K562 (cell line): ENCODE measurements at regions of chr3 and their contacts with region 1.

Region 1: DNA sequence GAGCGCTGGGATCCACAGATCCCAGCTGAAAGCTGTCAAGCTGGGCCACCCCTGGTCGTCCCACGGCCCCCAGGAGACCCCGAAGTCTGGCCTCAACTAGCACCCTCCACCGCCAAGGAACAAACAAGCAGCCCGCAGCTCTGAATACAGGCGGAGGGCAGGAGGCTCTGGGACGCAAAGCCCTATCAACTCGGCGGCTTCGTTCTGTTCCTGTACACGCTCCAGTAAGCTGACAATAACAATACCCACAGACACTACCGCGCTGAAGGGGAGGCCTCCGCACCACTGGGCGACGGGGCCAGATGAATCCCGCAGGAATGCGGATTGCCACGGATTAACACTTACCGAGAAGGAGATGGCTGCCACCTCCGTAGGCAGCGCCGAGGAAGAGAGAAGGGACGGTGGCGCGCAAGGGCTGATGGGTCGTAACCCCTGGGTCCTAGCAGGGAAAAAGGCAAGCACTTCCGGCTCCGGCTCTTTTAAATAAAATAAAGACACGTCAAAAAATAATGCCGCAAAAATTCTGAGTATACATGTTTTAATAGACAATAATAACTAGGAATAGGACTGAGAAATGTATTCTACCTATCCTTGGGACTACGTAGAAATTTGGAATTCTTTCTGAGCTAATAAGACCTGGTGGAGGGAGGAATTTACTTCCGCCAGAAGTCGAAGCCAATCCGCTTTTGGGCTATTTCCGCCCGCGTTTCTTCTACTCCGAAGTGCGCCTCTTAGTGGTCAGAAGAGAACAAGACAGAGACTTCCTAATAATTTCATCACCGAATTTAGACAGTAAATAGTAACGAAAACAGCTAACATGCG is at the start of gene RPL32:
- DNase-seq: peak; percentile 90 to 97 (median 91)
- ATAC-seq: peak; percentile 82
- H3K4me3 ChIP-seq: peak within 1 kb of the TSS; percentile 85
- H3K27ac ChIP-seq: peak within 1 kb of the TSS; percentile 93
- H3K4me1 ChIP-seq: peaks cover 24 to 33% of the 10 kb centered on the region in 2 experiments; a peak in 4 of 5 replicates
- H3K27me3 ChIP-seq: no peaks in the 10 kb centered on the region
- CTCF ChIP-seq: peak; percentile 75 to 94 (median 93)
- EP300 ChIP-seq: no peak; the same call in 1 of the 2 replicates
- POLR2A ChIP-seq: peak; percentile 99
- RAD21 ChIP-seq: peak in 1 of 2 experiments; percentile 22; a peak in 2 of 4 replicates
- polyA plus RNA-seq, gene RPL32: 3,469 to 4,286 TPM

Region 2: DNA sequence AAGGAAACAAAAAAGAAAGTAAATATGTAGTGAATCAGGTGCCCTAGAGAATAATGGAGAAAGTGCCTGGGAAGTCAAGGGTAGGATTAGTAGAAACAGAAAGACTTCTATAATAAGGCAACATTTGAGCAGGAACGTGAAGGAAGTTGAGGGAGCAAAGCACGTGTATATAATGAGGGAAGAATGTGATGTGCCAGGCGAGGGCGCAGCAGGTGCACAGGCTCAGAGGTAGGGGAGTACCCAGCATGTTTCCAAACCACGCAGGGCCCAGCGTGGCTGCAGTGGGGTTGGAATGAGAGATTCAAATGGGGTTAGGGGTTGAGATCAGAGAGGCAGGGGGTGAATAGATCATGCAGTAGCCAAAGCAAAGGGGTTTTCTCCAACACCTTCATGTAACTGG is 1105.7 kb before region 1 on chr3:
- CTCF ChIA-PET with region 1: no interaction called
- POLR2A ChIA-PET with region 1: no interaction called
- in situ Hi-C with region 1: no loop called
- intact Hi-C with region 1: no loop called
- DNase-seq: no peak
- ATAC-seq: peak; percentile 29; the same call in 1 of the 3 replicates
- H3K4me3 ChIP-seq: no peak overlapping the region
- H3K27ac ChIP-seq: no peak overlapping the region
- H3K4me1 ChIP-seq: no peaks in the 10 kb centered on the region
- H3K27me3 ChIP-seq: peaks cover 33 to 53% of the 10 kb centered on the region in 2 experiments
- CTCF ChIP-seq: no peak
- EP300 ChIP-seq: no peak
- POLR2A ChIP-seq: no peak
- RAD21 ChIP-seq: peak in 1 of 2 experiments; percentile 6; a peak in 1 of 4 replicates

Region 3: DNA sequence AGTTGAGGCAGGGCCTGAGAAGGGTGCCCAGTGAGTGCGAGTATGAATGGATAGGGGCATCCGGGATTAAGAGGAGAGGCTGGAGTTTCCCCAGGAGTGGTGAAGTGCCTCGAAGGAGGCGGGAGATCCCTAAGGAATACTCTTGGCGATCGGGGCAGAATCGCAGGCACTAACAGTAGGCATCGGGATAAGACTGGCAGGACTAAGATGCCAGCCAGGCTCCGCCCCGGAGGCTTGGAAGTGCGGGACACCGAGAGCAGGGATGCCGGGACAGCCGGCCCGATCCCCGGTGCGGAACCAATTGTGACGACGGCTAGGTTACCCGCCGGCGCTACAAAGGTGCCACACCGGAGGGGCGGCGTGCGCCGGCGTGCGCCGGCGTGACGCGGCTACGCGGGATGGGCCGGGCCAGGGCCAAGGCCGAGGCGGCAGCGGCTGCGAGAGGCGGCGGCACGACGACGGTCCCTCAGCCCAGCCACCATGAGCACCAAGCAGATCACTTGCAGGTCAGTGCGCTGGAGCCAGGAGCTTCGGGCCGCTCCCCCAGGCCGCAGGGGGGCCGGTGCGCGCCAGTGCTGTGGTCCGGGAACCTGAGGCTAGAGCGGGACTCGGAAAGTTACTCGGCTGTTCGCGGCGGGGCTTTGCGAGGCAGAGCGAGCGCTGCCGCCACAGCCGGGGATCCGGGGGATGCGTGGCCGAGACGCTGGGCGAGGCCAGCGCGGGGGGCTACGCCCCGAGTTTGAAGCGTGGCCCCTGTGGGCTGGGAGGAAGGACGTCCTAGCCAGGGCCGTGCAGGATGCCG is 284.5 kb before region 1 on chr3 and contains the start of gene MKRN2:
- CTCF ChIA-PET with region 1: no interaction called
- POLR2A ChIA-PET with region 1: no interaction called
- in situ Hi-C with region 1: no loop called
- intact Hi-C with region 1: loop called (anchors 5 kb)
- DNase-seq: peak; percentile 92 to 94 (median 92)
- ATAC-seq: peak; percentile 93
- H3K4me3 ChIP-seq: peak within 1 kb of the TSS; percentile 82
- H3K27ac ChIP-seq: peak within 1 kb of the TSS; percentile 91
- H3K4me1 ChIP-seq: peaks cover 17 to 22% of the 10 kb centered on the region in 2 experiments
- H3K27me3 ChIP-seq: no peaks in the 10 kb centered on the region
- CTCF ChIP-seq: 0 out of 6 replicates have a peak, but pooled peaks of 1 of the 3 experiments have one; percentile 6
- EP300 ChIP-seq: peak; percentile 70
- POLR2A ChIP-seq: peak; percentile 99
- RAD21 ChIP-seq: peak in 1 of 2 experiments; percentile 2; a peak in 1 of 4 replicates
- polyA plus RNA-seq, gene MKRN2: 29.4 to 46.0 TPM

Region 4: DNA sequence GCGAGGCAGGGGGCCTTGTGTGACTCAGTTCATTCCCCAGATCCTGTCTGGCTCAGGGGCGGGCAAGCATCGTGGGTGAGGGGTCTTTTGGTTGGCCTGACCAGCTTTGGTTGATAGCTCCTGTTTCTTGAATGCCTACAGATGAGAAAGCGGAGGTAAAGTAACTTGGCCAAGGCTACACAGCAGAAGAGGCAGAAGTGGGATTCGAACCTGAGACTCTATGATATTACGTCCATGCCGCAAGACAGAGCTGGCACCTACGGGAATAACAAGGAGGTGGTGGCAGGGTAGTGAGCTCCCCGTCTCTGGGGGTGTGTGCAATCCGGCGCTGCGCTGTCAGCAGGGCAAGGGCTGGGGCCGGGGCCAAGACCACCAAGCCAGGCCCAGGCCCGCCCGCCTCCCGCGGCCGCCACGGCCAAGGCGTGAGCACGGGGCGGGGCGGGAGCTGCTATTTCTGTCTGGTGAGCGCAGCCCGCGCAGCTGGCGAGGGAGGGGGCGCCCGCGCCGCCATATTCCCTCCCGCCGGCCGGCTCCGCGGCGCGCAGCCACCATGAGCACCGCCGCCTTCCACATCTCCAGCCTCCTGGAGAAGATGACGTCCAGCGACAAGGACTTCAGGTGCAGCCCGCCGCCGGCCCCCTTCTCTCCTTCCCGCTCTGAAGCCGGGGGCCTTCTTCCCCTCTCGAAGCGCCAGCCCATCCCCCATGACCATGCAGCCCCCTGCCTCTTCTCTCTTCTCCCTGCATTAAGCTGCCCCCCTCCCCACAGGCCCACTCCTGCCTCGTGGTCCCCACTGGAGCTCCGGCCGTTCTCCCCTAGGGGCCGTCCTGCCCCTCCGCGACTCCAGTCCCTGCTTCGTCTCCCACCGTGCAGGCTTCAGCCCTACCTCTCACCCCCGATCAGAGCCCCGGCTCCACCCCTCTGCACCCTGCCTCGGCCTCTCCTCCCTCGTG is 44.9 kb before region 1 on chr3 and contains the start of gene CAND2:
- CTCF ChIA-PET with region 1: no interaction called
- POLR2A ChIA-PET with region 1: interaction called, 10 read pairs
- in situ Hi-C with region 1: no loop called
- intact Hi-C with region 1: no loop called
- DNase-seq: peak; percentile 78 to 87 (median 84)
- ATAC-seq: peak; percentile 96
- H3K4me3 ChIP-seq: peak within 1 kb of the TSS; percentile 73
- H3K27ac ChIP-seq: peak within 1 kb of the TSS; percentile 77
- H3K4me1 ChIP-seq: peaks cover 8 to 25% of the 10 kb centered on the region in 2 experiments; a peak in 3 of 5 replicates
- H3K27me3 ChIP-seq: no peaks in the 10 kb centered on the region
- CTCF ChIP-seq: no peak
- EP300 ChIP-seq: no peak
- POLR2A ChIP-seq: peak; percentile 82
- RAD21 ChIP-seq: no peak
- polyA plus RNA-seq, gene CAND2: 0.91 to 1.4 TPM

Region 5: GRCh38 chr3:12822725-12823373 is 18.5 kb before region 1 on chr3:
- CTCF ChIA-PET with region 1: no interaction called
- POLR2A ChIA-PET with region 1: interaction called, 70 read pairs
- in situ Hi-C with region 1: no loop called
- intact Hi-C with region 1: no loop called
- DNase-seq: peak in 3 of 4 experiments; percentile 49 to 64 (median 49)
- ATAC-seq: peak; percentile 83
- H3K4me3 ChIP-seq: no peak overlapping the region
- H3K27ac ChIP-seq: no peak overlapping the region; the same call in 2 of the 3 replicates
- H3K4me1 ChIP-seq: peaks cover 0 to 2% of the 10 kb centered on the region in 2 experiments; a peak in 1 of 5 replicates
- H3K27me3 ChIP-seq: no peaks in the 10 kb centered on the region
- CTCF ChIP-seq: peak; percentile 52 to 74 (median 57); a peak in 4 of 6 replicates
- EP300 ChIP-seq: no peak
- POLR2A ChIP-seq: no peak
- RAD21 ChIP-seq: peak in 1 of 2 experiments; percentile 44; a peak in 3 of 4 replicates

Region 6: DNA sequence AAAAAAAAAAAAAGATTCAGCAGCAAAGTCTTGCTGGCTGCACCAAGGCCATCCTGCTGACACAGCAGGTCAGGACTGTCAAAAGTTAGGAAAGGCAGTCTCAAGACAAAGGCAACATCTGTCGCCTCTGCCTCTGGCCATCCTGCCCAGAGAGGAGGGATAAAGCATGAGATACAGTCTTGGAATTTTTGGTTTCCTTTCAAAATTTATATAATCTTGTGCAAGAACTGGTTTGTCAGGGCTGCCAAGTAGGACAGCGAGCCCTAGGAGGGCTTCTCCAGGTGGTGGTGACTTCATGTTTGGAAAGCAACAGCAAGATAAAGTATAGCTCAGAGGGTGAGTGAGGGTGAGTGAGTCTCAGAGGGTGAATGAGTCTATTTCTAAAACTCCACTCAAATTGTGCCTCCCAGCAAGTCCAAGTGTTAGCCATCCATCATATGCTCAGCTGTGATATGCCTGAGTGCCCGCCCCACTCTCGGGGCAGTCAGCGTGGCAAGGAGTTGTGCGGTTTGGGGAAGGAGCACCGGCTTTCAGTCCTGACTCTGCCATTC is 11.9 kb after region 1 on chr3:
- CTCF ChIA-PET with region 1: no interaction called
- POLR2A ChIA-PET with region 1: interaction called, 25 read pairs
- in situ Hi-C with region 1: no loop called
- intact Hi-C with region 1: no loop called
- DNase-seq: no peak
- ATAC-seq: no peak
- H3K4me3 ChIP-seq: no peak overlapping the region
- H3K27ac ChIP-seq: no peak overlapping the region
- H3K4me1 ChIP-seq: no peaks in the 10 kb centered on the region; a peak in 1 of 5 replicates
- H3K27me3 ChIP-seq: peaks cover 41 to 53% of the 10 kb centered on the region in 2 experiments
- CTCF ChIP-seq: no peak
- EP300 ChIP-seq: no peak
- POLR2A ChIP-seq: no peak
- RAD21 ChIP-seq: no peak

Region 7: DNA sequence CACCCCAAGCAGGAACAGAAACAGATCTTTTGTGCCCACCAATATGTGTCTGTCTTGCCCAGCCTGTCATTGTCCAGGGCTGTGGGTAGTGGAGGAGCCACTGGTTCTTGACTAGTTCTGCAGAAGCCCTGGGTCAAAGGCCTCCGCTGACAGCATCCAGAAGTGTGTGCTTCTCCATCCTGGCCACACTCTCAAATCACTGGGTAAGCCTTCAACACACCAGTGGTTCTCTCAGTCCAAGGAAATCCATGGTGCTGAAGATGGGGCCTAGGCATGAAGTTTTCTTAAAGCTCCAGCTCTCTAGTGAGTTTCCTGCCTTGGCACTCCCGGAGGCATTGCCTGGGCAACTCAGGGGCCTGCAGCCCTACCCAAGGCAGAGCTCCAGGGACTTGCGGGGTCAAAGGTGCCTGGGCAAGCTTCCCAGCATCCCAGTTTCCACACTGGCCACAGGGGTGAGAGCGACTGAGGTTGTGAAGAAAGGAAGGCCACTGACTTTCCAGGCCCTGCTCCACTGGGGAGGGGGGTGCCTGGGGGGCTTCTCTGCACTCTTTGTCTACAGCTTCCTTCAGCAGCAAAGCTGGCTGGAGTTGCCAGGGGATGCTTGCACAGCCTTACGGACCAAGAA is 37.9 kb after region 1 on chr3:
- CTCF ChIA-PET with region 1: no interaction called
- POLR2A ChIA-PET with region 1: interaction called, 12 read pairs
- in situ Hi-C with region 1: no loop called
- intact Hi-C with region 1: no loop called
- DNase-seq: peak in 2 of 4 experiments; percentile 61 to 67
- ATAC-seq: peak; percentile 42
- H3K4me3 ChIP-seq: no peak overlapping the region
- H3K27ac ChIP-seq: peak overlapping the region; percentile 43
- H3K4me1 ChIP-seq: peaks cover 56 to 77% of the 10 kb centered on the region in 2 experiments
- H3K27me3 ChIP-seq: no peaks in the 10 kb centered on the region
- CTCF ChIP-seq: no peak
- EP300 ChIP-seq: no peak
- POLR2A ChIP-seq: no peak
- RAD21 ChIP-seq: no peak

Region 8: DNA sequence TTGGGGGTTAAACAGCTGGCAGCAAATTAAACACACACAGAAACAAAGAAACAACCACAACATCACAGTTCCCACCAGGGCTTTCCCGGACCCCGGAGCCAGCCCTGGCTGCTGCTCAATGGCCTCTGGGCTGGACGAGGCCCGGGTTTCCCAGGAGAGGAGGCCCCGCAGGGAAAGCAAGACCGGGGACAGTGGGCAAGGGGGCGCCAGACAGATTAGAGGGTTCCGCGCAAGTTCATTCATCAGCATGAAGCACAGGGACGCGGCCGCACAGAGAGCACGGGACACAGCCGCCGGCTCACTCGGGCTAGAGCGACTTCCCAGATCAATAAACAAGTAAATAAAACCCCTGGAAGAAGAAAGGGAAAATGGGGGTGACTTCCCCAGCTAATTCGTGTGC is 66.4 kb after region 1 on chr3:
- CTCF ChIA-PET with region 1: no interaction called
- POLR2A ChIA-PET with region 1: no interaction called
- in situ Hi-C with region 1: no loop called
- intact Hi-C with region 1: no loop called
- DNase-seq: no peak
- ATAC-seq: no peak
- H3K4me3 ChIP-seq: no peak overlapping the region
- H3K27ac ChIP-seq: no peak overlapping the region
- H3K4me1 ChIP-seq: peaks cover 0 to 24% of the 10 kb centered on the region in 2 experiments; a peak in 1 of 5 replicates
- H3K27me3 ChIP-seq: no peaks in the 10 kb centered on the region
- CTCF ChIP-seq: no peak
- EP300 ChIP-seq: no peak
- POLR2A ChIP-seq: no peak
- RAD21 ChIP-seq: no peak